ENCODE measurements at regions of chr7 and their contacts with region 1.

Region 1: GRCh38 chr7:20172736-20173334 is 44.3 kb downstream of the MACC1 start:
- DNase-seq: no peak
- H3K4me3 ChIP-seq: no peak overlapping the region
- CTCF ChIP-seq: peak; percentile 59

Region 2: GRCh38 chr7:19747740-19748339 is 425.0 kb before region 1 on chr7:
- CTCF ChIA-PET with region 1: interaction called, 15 read pairs
- POLR2A ChIA-PET with region 1: no interaction called
- DNase-seq: no peak
- H3K4me3 ChIP-seq: no peak overlapping the region
- CTCF ChIP-seq: peak; percentile 29

Region 3: GRCh38 chr7:19754521-19755116 is 418.2 kb before region 1 on chr7:
- CTCF ChIA-PET with region 1: interaction called, 11 read pairs
- POLR2A ChIA-PET with region 1: no interaction called
- DNase-seq: no peak
- H3K4me3 ChIP-seq: no peak overlapping the region
- CTCF ChIP-seq: peak; percentile 41

Region 4: DNA sequence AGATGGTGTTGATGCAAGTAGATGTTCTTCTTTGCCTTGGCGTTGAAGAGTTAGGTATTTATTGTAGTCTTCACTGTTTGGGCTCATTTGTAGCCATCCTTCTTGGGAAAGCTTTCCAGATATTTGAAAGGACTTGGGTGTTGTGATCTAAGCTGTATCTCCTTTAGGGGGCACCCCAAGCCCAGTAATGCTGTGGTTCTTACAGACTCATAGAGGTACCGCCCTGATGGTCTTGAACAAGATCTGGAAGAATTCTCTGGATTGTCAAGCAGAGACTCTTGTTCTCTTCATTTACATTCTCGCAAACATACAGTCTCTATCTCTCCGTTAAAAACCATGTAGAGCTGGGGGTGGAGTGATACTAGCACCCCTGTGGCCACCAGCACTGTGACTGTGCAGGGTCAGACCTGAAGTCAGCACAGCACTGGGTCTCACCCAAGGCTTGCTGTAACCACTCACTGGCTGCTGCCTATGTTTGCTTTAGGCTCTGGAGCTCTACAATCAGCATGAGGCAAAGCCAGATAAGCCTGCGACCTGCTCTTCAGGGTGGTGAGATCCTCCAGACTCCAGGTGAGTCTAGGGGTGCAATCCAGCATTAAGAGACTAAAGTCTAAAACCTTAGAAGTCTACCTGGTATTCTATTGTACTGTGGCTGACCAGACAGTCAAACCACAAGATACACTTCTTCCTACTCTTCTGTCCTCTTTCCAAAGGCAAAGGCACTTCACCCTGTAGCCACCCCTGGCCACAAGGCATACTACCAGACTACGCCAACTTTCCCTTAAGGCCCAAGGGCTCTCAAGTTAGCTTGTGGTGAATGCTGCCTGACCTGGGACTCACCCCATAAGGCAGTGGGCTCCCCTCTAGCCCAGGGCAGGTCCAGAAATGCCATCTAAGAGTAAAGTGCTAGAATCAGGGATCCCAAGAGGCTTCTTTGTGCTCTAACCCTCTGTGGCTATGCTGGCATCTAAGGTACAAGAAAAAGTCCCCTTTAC is 189.7 kb before region 1 on chr7:
- CTCF ChIA-PET with region 1: interaction called, 59 read pairs
- POLR2A ChIA-PET with region 1: no interaction called
- DNase-seq: no peak
- H3K4me3 ChIP-seq: no peak overlapping the region
- CTCF ChIP-seq: peak; percentile 43

Region 5: GRCh38 chr7:20183086-20183485 is 10.3 kb after region 1 on chr7:
- CTCF ChIA-PET with region 1: interaction called, 11 read pairs
- POLR2A ChIA-PET with region 1: no interaction called
- DNase-seq: peak; percentile 7
- H3K4me3 ChIP-seq: no peak overlapping the region
- CTCF ChIP-seq: no peak

Region 6: GRCh38 chr7:20310963-20311742 is 138.3 kb after region 1 on chr7:
- CTCF ChIA-PET with region 1: interaction called, 21 read pairs
- POLR2A ChIA-PET with region 1: no interaction called
- DNase-seq: no peak
- H3K4me3 ChIP-seq: no peak overlapping the region
- CTCF ChIP-seq: peak; percentile 17